Activated T-helper 2 cell treated with anti-CD3 and anti-CD28 coated beads, Interferon-gamma antibody, Interleukin-2, Interleukin-4, amounts not matched to agents 10 μg/mL and 5 μg/mL and 100 μg/mL, durations not matched to agents 14 hours and 24 hours and 36 hours (primary cell): ENCODE measurements at regions of chr2 and their contacts with region 1.

Region 1: GRCh38 chr2:171878481-171878993 is 15.5 kb downstream of the SLC25A12 start:
- DNase-seq: no peak
- H3K4me3 Mint-ChIP-seq: no peak overlapping the region
- H3K27ac Mint-ChIP-seq: peak overlapping the region; percentile 59
- H3K4me1 Mint-ChIP-seq: peaks cover 36% of the 10 kb centered on the region
- H3K27me3 Mint-ChIP-seq: no peaks in the 10 kb centered on the region

Region 2: GRCh38 chr2:171522052-171522787 is 356.3 kb before region 1 on chr2 and contains the start of gene CYBRD1:
- intact Hi-C with region 1: no loop called
- DNase-seq: peak; percentile 9
- H3K4me3 Mint-ChIP-seq: peak within 1 kb of the TSS; percentile 80
- H3K27ac Mint-ChIP-seq: peak within 1 kb of the TSS; percentile 60
- H3K4me1 Mint-ChIP-seq: peaks cover 9% of the 10 kb centered on the region
- H3K27me3 Mint-ChIP-seq: peaks cover 58% of the 10 kb centered on the region
- total RNA-seq, gene CYBRD1: 5.7 and 8.0 TPM in 2 replicates

Region 3: GRCh38 chr2:171798252-171798741 is 80.2 kb before region 1 on chr2:
- intact Hi-C with region 1: loop called (anchors 5 kb)
- DNase-seq: no peak
- H3K4me3 Mint-ChIP-seq: no peak overlapping the region
- H3K27ac Mint-ChIP-seq: peak overlapping the region; percentile 68
- H3K4me1 Mint-ChIP-seq: peaks cover 23% of the 10 kb centered on the region
- H3K27me3 Mint-ChIP-seq: no peaks in the 10 kb centered on the region

Region 4: DNA sequence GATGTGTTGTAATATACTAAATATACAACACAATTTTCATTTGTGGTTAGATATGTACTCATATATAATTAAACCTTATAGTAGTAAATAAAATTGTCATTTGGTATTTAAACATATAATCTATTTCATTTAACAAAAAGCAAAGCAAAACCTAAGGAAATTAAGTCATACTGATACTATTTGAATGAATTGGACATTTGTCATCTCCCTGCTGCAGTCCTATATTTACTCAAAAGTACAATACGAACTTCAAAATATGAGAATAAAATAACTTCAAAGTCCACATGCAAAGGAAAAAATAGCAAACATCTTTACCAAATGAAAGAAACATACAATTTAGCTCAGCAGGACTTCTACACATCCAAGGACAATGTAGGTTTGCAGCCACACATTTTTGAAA is 32.0 kb after region 1 on chr2:
- intact Hi-C with region 1: loop called (anchors 1 kb)
- DNase-seq: no peak
- H3K4me3 Mint-ChIP-seq: no peak overlapping the region
- H3K27ac Mint-ChIP-seq: no peak overlapping the region
- H3K4me1 Mint-ChIP-seq: peaks cover 4% of the 10 kb centered on the region
- H3K27me3 Mint-ChIP-seq: peaks cover 3% of the 10 kb centered on the region

Region 5: GRCh38 chr2:171922230-171923022 is 43.9 kb after region 1 on chr2 and contains the start of gene HAT1:
- intact Hi-C with region 1: loop called (anchors 5 kb)
- DNase-seq: peak; percentile 97
- H3K4me3 Mint-ChIP-seq: peak within 1 kb of the TSS; percentile 94
- H3K27ac Mint-ChIP-seq: peak within 1 kb of the TSS; percentile 96
- H3K4me1 Mint-ChIP-seq: peaks cover 33% of the 10 kb centered on the region
- H3K27me3 Mint-ChIP-seq: peaks cover 2% of the 10 kb centered on the region
- total RNA-seq, gene HAT1: 67.4 and 70.1 TPM in 2 replicates

Region 6: GRCh38 chr2:171952276-171952675 is 73.7 kb after region 1 on chr2:
- intact Hi-C with region 1: no loop called
- DNase-seq: no peak
- H3K4me3 Mint-ChIP-seq: no peak overlapping the region
- H3K27ac Mint-ChIP-seq: no peak overlapping the region
- H3K4me1 Mint-ChIP-seq: peaks cover 19% of the 10 kb centered on the region
- H3K27me3 Mint-ChIP-seq: no peaks in the 10 kb centered on the region

Region 7: GRCh38 chr2:171999604-172000469 is 121.3 kb after region 1 on chr2 and contains the start of gene METAP1D:
- intact Hi-C with region 1: no loop called
- DNase-seq: peak; percentile 86
- H3K4me3 Mint-ChIP-seq: peak within 1 kb of the TSS; percentile 92
- H3K27ac Mint-ChIP-seq: peak within 1 kb of the TSS; percentile 96
- H3K4me1 Mint-ChIP-seq: peaks cover 18% of the 10 kb centered on the region
- H3K27me3 Mint-ChIP-seq: peaks cover 3% of the 10 kb centered on the region
- total RNA-seq, gene METAP1D: 6.0 and 7.9 TPM in 2 replicates